Activated B cell treated with CpG ODN at 0.5 μM for 24 hours (primary cell): ENCODE measurements at regions of chr1 and their contacts with region 1.

Region 1: DNA sequence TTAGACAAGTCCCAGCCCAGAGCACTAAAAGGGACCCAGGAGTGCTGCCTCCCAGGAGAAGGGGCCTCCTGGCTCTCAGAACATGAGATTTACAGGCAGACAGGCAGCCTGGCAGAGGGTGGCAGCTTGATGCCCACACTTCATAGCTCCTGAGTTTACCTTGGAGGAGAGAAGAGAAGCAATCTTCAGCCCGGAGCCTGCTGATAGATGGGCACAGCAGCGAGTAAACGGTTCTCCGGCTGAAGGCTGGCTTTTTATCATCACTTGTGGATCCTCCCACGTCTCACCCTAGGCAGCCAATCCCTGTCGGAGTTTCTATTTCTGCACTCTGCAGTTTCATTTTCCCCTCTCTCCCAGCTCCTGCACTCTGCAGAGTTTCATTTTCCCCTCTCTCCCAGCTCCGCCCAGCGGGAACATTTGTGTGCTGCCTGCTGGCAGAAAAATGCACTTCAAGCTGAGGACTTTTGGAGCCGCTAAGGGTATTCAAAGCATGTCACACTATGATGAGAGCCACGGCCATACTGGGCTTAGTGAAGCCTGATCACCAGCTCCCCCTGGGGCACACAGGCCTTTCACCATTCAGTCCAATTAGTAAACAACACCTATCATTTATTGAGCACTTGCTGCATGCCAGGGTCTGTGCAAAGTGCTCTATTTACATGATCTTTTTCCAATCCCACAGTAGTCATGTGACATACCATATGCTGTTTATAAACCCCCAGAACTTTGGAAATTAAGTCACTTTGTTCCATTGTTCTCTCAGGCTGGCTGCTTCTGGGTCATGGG is at the start of gene IFI6:
- DNase-seq: peak; percentile 63
- ATAC-seq: peak; percentile 90
- H3K4me3 Mint-ChIP-seq: peak within 1 kb of the TSS; percentile 97
- H3K27ac Mint-ChIP-seq: peak within 1 kb of the TSS; percentile 98
- H3K4me1 Mint-ChIP-seq: peaks cover 31% of the 10 kb centered on the region
- H3K27me3 Mint-ChIP-seq: no peaks in the 10 kb centered on the region
- CTCF ChIP-seq: no peak
- total RNA-seq, gene IFI6: 10.9 and 11.4 TPM in 2 replicates

Region 2: GRCh38 chr1:27719286-27720251 is 47.4 kb after region 1 on chr1:
- CTCF ChIA-PET with region 1: interaction called, 9 read pairs
- POLR2A ChIA-PET with region 1: no interaction called
- intact Hi-C with region 1: loop called (anchors 1 kb)
- DNase-seq: no peak
- ATAC-seq: peak; percentile 21
- H3K4me3 Mint-ChIP-seq: no peak overlapping the region
- H3K27ac Mint-ChIP-seq: no peak overlapping the region
- H3K4me1 Mint-ChIP-seq: peaks cover under 1% of the 10 kb centered on the region
- H3K27me3 Mint-ChIP-seq: peaks cover 15% of the 10 kb centered on the region
- CTCF ChIP-seq: no peak

Region 3: GRCh38 chr1:27744556-27744955 is 72.4 kb after region 1 on chr1:
- CTCF ChIA-PET with region 1: no interaction called
- POLR2A ChIA-PET with region 1: no interaction called
- intact Hi-C with region 1: no loop called
- DNase-seq: no peak
- ATAC-seq: no peak
- H3K4me3 Mint-ChIP-seq: no peak overlapping the region
- H3K27ac Mint-ChIP-seq: no peak overlapping the region
- H3K4me1 Mint-ChIP-seq: no peaks in the 10 kb centered on the region
- H3K27me3 Mint-ChIP-seq: no peaks in the 10 kb centered on the region
- CTCF ChIP-seq: no peak

Region 4: DNA sequence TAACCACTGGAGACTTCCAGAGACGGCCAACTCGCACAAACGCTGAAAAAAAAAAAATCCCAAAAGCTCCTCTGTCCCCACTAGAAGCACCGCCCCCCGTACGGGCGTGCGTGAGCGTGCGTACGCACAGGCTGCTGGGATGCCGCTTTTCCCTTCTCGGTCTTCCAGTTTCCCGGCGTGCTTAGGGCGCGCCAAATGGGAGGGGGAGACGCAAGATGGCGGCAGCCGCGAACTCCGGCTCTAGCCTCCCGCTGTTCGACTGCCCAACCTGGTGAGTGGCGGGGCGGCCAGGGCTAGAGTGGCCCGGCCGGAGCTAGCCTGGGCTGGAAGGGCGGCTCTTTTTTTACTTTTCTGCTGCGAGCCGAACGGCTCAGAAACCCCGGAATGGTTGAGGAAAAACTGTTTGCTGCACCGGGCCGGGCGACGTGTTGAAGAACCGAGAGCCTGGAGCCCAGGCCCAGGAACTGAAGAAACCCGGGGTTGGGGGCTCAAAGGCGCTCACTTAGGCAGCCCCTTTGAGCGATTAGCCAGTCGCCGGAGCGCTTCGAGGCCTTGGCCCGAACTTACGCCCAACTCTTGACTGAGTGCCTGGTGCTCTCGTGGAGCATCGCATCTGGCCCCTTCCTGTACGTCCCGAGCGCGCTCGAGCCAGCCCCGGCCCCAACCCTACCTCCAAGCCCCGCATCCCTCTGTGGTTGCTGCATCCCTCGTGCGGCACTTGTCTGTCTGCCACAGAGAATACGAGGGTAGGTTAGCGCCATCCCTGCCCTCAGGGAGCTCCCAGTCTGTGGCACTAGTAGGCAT is 158.7 kb after region 1 on chr1 and contains the start of gene PPP1R8:
- CTCF ChIA-PET with region 1: no interaction called
- POLR2A ChIA-PET with region 1: interaction called, 10 read pairs
- intact Hi-C with region 1: loop called (anchors 1 kb)
- DNase-seq: peak; percentile 84
- ATAC-seq: peak; percentile 98
- H3K4me3 Mint-ChIP-seq: peak within 1 kb of the TSS; percentile 95
- H3K27ac Mint-ChIP-seq: peak within 1 kb of the TSS; percentile 89
- H3K4me1 Mint-ChIP-seq: peaks cover 22% of the 10 kb centered on the region
- H3K27me3 Mint-ChIP-seq: no peaks in the 10 kb centered on the region
- CTCF ChIP-seq: no peak
- total RNA-seq, gene PPP1R8: 48.3 and 52.0 TPM in 2 replicates